ENCODE measurements at regions of chr2 and their contacts with region 1.

Region 1: GRCh38 chr2:73212448-73213176 is 1.4 kb upstream of the SMYD5 start:
- DNase-seq: peak; percentile 35
- H3K4me3 ChIP-seq: no peak overlapping the region
- H3K27me3 ChIP-seq: peaks cover 5% of the 10 kb centered on the region; the same call in 1 of the 2 replicates
- CTCF ChIP-seq: peak; percentile 98

Region 2: DNA sequence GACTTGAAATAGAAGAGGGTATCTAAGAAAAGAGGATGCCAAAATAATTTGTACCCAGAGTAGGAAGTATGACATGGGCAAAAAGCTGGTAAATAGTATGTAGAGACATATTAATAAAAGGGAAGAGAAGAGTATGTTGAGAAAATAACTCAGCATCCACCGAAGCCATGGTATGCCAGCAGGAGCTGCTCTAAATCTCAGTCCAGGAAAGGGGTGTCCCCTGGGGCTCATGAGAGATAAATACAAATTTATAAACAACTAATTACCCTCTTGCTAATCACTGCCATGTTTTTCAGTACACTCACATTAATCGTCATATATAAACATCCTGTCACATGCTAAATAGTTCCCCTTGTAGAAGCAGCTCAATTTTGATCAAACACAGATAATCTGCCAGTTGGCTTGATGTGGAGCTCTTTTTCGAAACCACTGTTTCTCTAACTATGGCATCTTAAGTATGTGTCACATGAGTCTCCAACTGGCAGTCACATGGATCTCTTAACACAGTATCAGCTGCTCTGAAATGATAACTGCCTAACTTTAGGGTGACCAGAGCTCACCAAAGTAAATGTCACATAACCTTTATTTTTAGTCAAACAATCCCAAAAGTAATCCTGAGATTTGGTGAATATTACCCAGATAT is 418.7 kb before region 1 on chr2:
- CTCF ChIA-PET with region 1: no interaction called
- POLR2A ChIA-PET with region 1: no interaction called
- DNase-seq: peak; percentile 22
- H3K4me3 ChIP-seq: no peak overlapping the region
- H3K27me3 ChIP-seq: no peaks in the 10 kb centered on the region
- CTCF ChIP-seq: no peak

Region 3: DNA sequence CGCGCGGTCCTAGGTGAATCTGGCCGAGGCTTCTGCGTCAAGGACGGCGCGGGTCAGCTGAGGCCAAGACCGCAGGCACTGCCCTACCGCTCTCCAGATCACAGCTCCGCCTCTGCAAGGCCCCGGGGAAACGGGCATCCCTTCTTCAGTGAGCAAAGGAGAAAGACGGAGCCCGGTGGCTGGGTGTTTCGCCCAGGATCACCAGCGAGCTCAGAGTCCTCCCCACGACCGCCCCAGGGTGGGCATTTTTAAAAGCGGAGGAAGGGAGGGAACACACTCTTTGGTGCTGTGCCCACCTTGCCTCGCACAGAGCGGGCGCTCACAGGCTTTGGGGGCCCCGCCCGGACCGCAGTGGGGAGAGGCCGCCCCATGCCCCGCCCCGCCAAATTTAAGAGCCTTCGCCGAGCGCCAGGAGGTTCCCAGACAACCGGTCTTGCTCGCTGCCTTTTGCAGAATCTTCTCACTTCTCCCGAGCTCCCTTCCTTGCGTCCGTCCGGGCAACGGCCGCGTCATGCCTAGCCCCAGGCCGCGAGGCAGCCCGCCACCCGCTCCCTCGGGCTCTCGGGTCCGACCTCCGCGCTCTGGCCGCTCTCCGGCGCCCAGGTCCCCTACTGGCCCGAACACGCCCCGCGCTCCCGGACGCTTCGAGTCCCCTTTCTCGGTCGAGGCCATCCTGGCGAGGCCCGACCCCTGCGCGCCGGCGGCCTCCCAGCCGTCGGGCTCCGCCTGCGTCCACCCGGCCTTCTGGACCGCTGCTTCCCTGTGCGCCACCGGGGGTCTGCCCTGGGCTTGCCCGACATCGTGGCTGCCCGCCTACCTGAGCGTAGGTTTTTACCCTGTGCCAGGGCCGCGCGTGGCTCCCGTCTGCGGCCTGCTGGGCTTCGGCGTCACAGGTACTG is 10.2 kb before region 1 on chr2 and contains the start of gene NOTO:
- CTCF ChIA-PET with region 1: interaction called, 16 read pairs
- POLR2A ChIA-PET with region 1: no interaction called
- DNase-seq: no peak
- H3K4me3 ChIP-seq: no peak within 1 kb of the TSS
- H3K27me3 ChIP-seq: peaks cover 31% of the 10 kb centered on the region
- CTCF ChIP-seq: no peak
- polyA plus RNA-seq, gene NOTO: not detected in 2 replicates

Region 4: GRCh38 chr2:73225513-73226360 is 13.1 kb after region 1 on chr2:
- CTCF ChIA-PET with region 1: interaction called, 18 read pairs
- POLR2A ChIA-PET with region 1: no interaction called
- DNase-seq: no peak
- H3K4me3 ChIP-seq: no peak overlapping the region
- H3K27me3 ChIP-seq: no peaks in the 10 kb centered on the region
- CTCF ChIP-seq: no peak

Region 5: DNA sequence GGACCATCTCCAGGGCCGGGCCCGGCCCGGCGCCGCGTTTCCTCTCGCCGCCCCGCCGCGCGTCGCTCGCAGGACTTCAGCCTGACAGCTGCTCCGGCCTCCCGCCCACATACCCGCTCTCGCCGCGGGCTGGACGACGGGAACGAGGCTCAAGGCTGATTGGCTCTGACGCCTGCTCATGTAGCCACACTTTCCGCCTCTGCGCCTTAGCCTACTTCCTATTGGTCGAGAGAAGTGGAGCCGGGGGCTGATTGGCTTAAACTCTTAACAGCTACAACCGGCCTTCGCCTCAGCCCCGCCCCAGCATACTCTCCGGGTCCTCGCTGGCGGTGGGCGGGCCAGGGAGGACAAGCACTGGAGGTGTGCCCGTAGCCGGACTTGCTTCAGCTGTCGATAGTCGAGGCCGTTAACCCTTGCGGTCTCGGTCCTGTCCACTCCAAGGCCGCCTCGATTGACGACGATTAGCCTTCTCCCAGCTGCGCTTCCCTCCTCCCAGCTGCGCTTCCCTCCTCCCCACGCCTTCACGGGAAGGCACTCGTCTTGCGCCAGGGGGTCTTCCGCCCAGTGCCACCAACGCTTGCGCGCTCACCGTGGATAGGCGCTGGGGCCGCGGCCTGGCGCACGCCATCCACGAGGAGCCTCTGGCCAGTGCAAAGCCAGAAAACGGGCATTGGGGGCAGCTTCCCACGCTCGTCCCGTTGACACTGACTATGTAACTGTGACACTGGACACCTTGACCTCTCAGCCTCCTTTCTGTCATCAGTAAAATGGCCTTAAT is 20.7 kb after region 1 on chr2 and contains the start of gene PRADC1:
- CTCF ChIA-PET with region 1: interaction called, 13 read pairs
- POLR2A ChIA-PET with region 1: no interaction called
- DNase-seq: peak; percentile 99
- H3K4me3 ChIP-seq: peak within 1 kb of the TSS; percentile 91
- H3K27me3 ChIP-seq: no peaks in the 10 kb centered on the region
- CTCF ChIP-seq: no peak
- polyA plus RNA-seq, gene PRADC1: 19.4 and 19.7 TPM in 2 replicates

Region 6: DNA sequence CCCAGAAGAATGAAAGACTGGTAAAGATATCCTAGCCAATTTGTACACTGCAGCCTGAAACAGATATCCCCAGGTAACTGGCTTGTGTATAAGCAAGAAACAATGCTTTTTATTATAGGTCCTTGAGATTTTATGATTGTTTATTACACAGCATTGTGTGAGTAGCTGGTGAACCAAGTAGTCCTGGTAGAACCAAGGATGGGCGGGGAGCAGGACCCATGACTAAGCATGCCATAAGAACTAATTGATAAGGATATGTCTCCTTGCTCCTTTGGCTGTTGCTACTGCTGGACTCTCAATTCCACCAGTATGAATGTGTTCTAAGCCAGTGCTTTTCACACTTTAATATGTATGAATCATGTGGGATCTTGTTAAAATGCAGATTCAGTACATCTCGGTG is 160.7 kb after region 1 on chr2:
- CTCF ChIA-PET with region 1: no interaction called
- POLR2A ChIA-PET with region 1: no interaction called
- DNase-seq: no peak
- H3K4me3 ChIP-seq: no peak overlapping the region
- H3K27me3 ChIP-seq: no peaks in the 10 kb centered on the region; the same call in none of the 2 replicates
- CTCF ChIP-seq: no peak

Measured in BJ (cell line).